Esophagus squamous epithelium (tissue), 5 donors: ENCODE measurements at regions of chr9 and their contacts with region 1.

Region 1: GRCh38 chr9:27379311-27380251 is 82.6 kb upstream of the EQTN start:
- DNase-seq: no peak
- H3K4me3 ChIP-seq: no peak overlapping the region
- H3K27ac ChIP-seq: no peak overlapping the region
- H3K4me1 ChIP-seq: peaks cover 0 to 38% (median 8%) of the 10 kb centered on the region in 3 donors
- H3K27me3 ChIP-seq: no peaks in the 10 kb centered on the region
- CTCF ChIP-seq: no peak
- POLR2A ChIP-seq: no peak

Region 2: GRCh38 chr9:27162045-27162444 is 217.5 kb before region 1 on chr9:
- intact Hi-C with region 1: no loop called
- DNase-seq: no peak
- H3K4me3 ChIP-seq: no peak overlapping the region
- H3K27ac ChIP-seq: no peak overlapping the region
- H3K4me1 ChIP-seq: no peaks in the 10 kb centered on the region
- H3K27me3 ChIP-seq: no peaks in the 10 kb centered on the region
- CTCF ChIP-seq: no peak
- POLR2A ChIP-seq: no peak

Region 3: DNA sequence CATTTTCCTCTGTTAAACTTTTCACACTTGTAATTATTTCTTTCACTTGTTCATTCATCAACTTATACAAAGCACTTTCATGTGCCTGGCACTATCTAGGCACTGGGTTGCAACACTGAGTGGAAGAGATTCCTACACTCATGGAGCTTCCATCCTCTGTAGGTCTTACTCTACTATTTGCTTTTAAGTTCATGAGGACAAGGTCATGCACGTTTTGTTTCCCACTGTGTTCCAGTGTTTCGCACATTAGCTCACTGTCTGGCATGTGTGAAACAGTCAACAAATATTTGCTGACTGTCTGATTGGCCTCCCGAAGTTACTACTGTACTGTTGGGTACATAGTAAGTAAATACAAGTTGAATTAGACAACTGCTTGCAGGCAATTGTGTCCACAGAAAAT is 56.7 kb after region 1 on chr9:
- intact Hi-C with region 1: loop called (anchors 10 kb)
- DNase-seq: no peak
- H3K4me3 ChIP-seq: no peak overlapping the region
- H3K27ac ChIP-seq: no peak overlapping the region
- H3K4me1 ChIP-seq: peaks cover 0 to 62% (median 24%) of the 10 kb centered on the region in 3 donors
- H3K27me3 ChIP-seq: no peaks in the 10 kb centered on the region
- CTCF ChIP-seq: no peak
- POLR2A ChIP-seq: no peak

Region 4: DNA sequence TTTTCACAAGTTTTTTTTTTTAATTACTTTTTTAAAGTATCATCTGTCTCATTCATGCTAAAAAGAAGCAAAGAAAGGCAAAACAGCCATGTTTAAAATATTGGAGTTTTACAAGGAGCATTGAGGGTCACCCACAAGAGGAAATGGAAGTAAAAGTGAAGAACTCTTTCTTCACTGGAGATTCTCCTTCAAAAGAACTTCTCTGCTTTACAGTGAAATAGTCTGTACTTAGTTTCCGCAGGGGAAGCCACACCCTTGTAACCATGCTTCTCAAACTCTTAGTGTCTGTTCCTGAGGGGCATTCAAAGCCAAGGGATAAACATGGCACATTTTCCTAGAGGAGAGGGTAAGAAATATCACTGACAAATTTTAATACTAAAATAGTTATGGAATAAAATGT is 185.1 kb after region 1 on chr9:
- intact Hi-C with region 1: no loop called
- DNase-seq: no peak
- H3K4me3 ChIP-seq: no peak overlapping the region
- H3K27ac ChIP-seq: peak overlapping the region in 1 of 4 donors; percentile 11
- H3K4me1 ChIP-seq: peaks cover 0 to 19% (median 0%) of the 10 kb centered on the region in 3 donors
- H3K27me3 ChIP-seq: no peaks in the 10 kb centered on the region
- CTCF ChIP-seq: no peak
- POLR2A ChIP-seq: no peak